Naive thymus-derived CD4-positive, alpha-beta T cell (primary cell): ENCODE measurements at regions of chr10 and their contacts with region 1.

Region 1: GRCh38 chr10:15859906-15860691 is at the start of gene MINDY3:
- DNase-seq: peak; percentile 54 to 86 (median 82)
- ATAC-seq: peak; percentile 94
- H3K4me3 ChIP-seq: peak within 1 kb of the TSS; percentile 97
- H3K4me3 Mint-ChIP-seq: peak within 1 kb of the TSS; percentile 95 to 100 (median 98)
- H3K27ac ChIP-seq: peak within 1 kb of the TSS; percentile 55
- H3K27ac Mint-ChIP-seq: peak within 1 kb of the TSS; percentile 90 to 96 (median 93)
- H3K4me1 ChIP-seq: peaks cover 10 to 22% of the 10 kb centered on the region in 2 donors
- H3K4me1 Mint-ChIP-seq: peaks cover 25 to 53% (median 45%) of the 10 kb centered on the region in 7 donors
- H3K27me3 ChIP-seq: no peaks in the 10 kb centered on the region
- H3K27me3 Mint-ChIP-seq: peaks cover 19 to 24% (median 22%) of the 10 kb centered on the region in 5 donors
- total RNA-seq, gene MINDY3: 21.4 to 43.8 (median 37.4) TPM

Region 2: GRCh38 chr10:15531927-15532722 is 328.0 kb before region 1 on chr10:
- CTCF ChIA-PET with region 1: no interaction called
- POLR2A ChIA-PET with region 1: no interaction called
- intact Hi-C with region 1: no loop called
- DNase-seq: no peak
- ATAC-seq: no peak
- H3K4me3 ChIP-seq: no peak overlapping the region
- H3K4me3 Mint-ChIP-seq: no peak overlapping the region
- H3K27ac ChIP-seq: no peak overlapping the region
- H3K27ac Mint-ChIP-seq: no peak overlapping the region
- H3K4me1 ChIP-seq: no peaks in the 10 kb centered on the region
- H3K4me1 Mint-ChIP-seq: peaks cover 0 to 2% (median 0%) of the 10 kb centered on the region in 7 donors
- H3K27me3 ChIP-seq: no peaks in the 10 kb centered on the region
- H3K27me3 Mint-ChIP-seq: peaks cover 2 to 33% (median 19%) of the 10 kb centered on the region in 5 donors

Region 3: DNA sequence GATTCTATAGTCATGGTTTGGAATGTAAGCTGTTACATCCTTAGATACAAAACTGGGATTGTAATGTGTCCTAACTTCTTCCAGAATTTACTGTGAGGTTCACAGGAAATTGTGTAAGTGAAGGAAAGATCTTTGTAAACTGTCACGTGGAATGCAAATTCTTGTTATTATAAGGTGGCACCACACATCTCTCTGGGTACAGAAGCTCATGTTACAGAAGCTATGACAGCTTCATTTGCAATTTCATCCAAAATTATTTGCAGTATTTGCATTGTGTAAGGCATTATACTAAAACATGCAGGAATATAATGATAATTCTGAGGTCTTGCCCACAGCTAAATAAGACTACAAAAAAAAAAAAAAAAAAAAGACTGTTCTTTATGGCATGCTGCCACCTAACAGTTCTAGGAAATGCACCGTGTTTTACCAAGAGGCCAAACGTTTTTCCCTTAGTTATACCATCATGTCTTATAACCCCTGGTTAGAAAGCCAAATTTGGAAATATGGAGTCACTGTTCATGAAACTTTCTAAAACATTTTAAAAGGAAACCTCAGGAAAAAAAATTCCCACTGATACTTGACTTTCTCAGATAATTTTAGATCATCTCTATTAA is 17.4 kb before region 1 on chr10:
- CTCF ChIA-PET with region 1: no interaction called
- POLR2A ChIA-PET with region 1: interaction called, 3 read pairs
- intact Hi-C with region 1: loop called in 1 of 2 experiments (anchors 2 kb)
- DNase-seq: no peak
- ATAC-seq: no peak
- H3K4me3 ChIP-seq: no peak overlapping the region
- H3K4me3 Mint-ChIP-seq: no peak overlapping the region
- H3K27ac ChIP-seq: no peak overlapping the region
- H3K27ac Mint-ChIP-seq: peak overlapping the region in 1 of 9 donors; percentile 19
- H3K4me1 ChIP-seq: no peaks in the 10 kb centered on the region
- H3K4me1 Mint-ChIP-seq: peaks cover 11 to 34% (median 30%) of the 10 kb centered on the region in 7 donors
- H3K27me3 ChIP-seq: no peaks in the 10 kb centered on the region
- H3K27me3 Mint-ChIP-seq: no peaks in the 10 kb centered on the region

Region 4: GRCh38 chr10:15877836-15878576 is 17.9 kb after region 1 on chr10:
- CTCF ChIA-PET with region 1: no interaction called
- POLR2A ChIA-PET with region 1: no interaction called
- intact Hi-C with region 1: no loop called
- DNase-seq: no peak
- ATAC-seq: no peak
- H3K4me3 ChIP-seq: no peak overlapping the region
- H3K4me3 Mint-ChIP-seq: no peak overlapping the region
- H3K27ac ChIP-seq: no peak overlapping the region
- H3K27ac Mint-ChIP-seq: no peak overlapping the region
- H3K4me1 ChIP-seq: no peaks in the 10 kb centered on the region
- H3K4me1 Mint-ChIP-seq: no peaks in the 10 kb centered on the region
- H3K27me3 ChIP-seq: no peaks in the 10 kb centered on the region
- H3K27me3 Mint-ChIP-seq: peaks cover 52 to 76% (median 64%) of the 10 kb centered on the region in 5 donors

Region 5: GRCh38 chr10:16436758-16437539 is 576.9 kb after region 1 on chr10 and contains the start of gene PTER:
- CTCF ChIA-PET with region 1: no interaction called
- POLR2A ChIA-PET with region 1: interaction called, 3 read pairs
- intact Hi-C with region 1: loop called (anchors 1 kb)
- DNase-seq: peak; percentile 92 to 99 (median 94)
- ATAC-seq: peak; percentile 100
- H3K4me3 ChIP-seq: peak within 1 kb of the TSS; percentile 93
- H3K4me3 Mint-ChIP-seq: peak within 1 kb of the TSS; percentile 91 to 99 (median 96)
- H3K27ac ChIP-seq: peak within 1 kb of the TSS; percentile 77
- H3K27ac Mint-ChIP-seq: peak within 1 kb of the TSS; percentile 87 to 97 (median 94)
- H3K4me1 ChIP-seq: peaks cover 13 to 28% of the 10 kb centered on the region in 2 donors
- H3K4me1 Mint-ChIP-seq: peaks cover 36 to 57% (median 48%) of the 10 kb centered on the region in 7 donors
- H3K27me3 ChIP-seq: no peaks in the 10 kb centered on the region
- H3K27me3 Mint-ChIP-seq: peaks cover 0 to 19% (median 0%) of the 10 kb centered on the region in 5 donors
- total RNA-seq, gene PTER: 12.9 to 23.7 (median 15.3) TPM